CD4-positive, alpha-beta T cell (primary cell): ENCODE measurements at regions of chr3 and their contacts with region 1.

Region 1: GRCh38 chr3:98154686-98155085 is 7.4 kb downstream of the OR5H14 start:
- DNase-seq: no peak
- ATAC-seq: no peak
- H3K4me3 ChIP-seq: no peak overlapping the region
- H3K4me3 Mint-ChIP-seq: no peak overlapping the region
- H3K27ac ChIP-seq: no peak overlapping the region
- H3K27ac Mint-ChIP-seq: no peak overlapping the region
- H3K4me1 ChIP-seq: no peaks in the 10 kb centered on the region
- H3K4me1 Mint-ChIP-seq: no peaks in the 10 kb centered on the region
- H3K27me3 ChIP-seq: no peaks in the 10 kb centered on the region
- H3K27me3 Mint-ChIP-seq: no peaks in the 10 kb centered on the region
- CTCF ChIP-seq: no peak

Region 2: GRCh38 chr3:98130421-98130820 is 24.3 kb before region 1 on chr3 and contains the start of gene OR5H1:
- CTCF ChIA-PET with region 1: no interaction called
- POLR2A ChIA-PET with region 1: no interaction called
- intact Hi-C with region 1: no loop called
- DNase-seq: no peak
- ATAC-seq: no peak
- H3K4me3 ChIP-seq: no peak within 1 kb of the TSS
- H3K4me3 Mint-ChIP-seq: no peak within 1 kb of the TSS
- H3K27ac ChIP-seq: no peak within 1 kb of the TSS
- H3K27ac Mint-ChIP-seq: no peak within 1 kb of the TSS
- H3K4me1 ChIP-seq: no peaks in the 10 kb centered on the region
- H3K4me1 Mint-ChIP-seq: no peaks in the 10 kb centered on the region
- H3K27me3 ChIP-seq: no peaks in the 10 kb centered on the region
- H3K27me3 Mint-ChIP-seq: no peaks in the 10 kb centered on the region
- CTCF ChIP-seq: no peak
- total RNA-seq, gene OR5H1: not detected

Region 3: GRCh38 chr3:98209244-98209643 is 54.6 kb after region 1 on chr3:
- CTCF ChIA-PET with region 1: no interaction called
- POLR2A ChIA-PET with region 1: no interaction called
- intact Hi-C with region 1: loop called in 1 of 2 experiments (anchors 1 kb)
- DNase-seq: no peak
- ATAC-seq: no peak
- H3K4me3 ChIP-seq: no peak overlapping the region
- H3K4me3 Mint-ChIP-seq: no peak overlapping the region
- H3K27ac ChIP-seq: no peak overlapping the region
- H3K27ac Mint-ChIP-seq: no peak overlapping the region
- H3K4me1 ChIP-seq: no peaks in the 10 kb centered on the region
- H3K4me1 Mint-ChIP-seq: no peaks in the 10 kb centered on the region
- H3K27me3 ChIP-seq: no peaks in the 10 kb centered on the region
- H3K27me3 Mint-ChIP-seq: no peaks in the 10 kb centered on the region
- CTCF ChIP-seq: no peak